CD8-positive, alpha-beta memory T cell (primary cell): ENCODE measurements at regions of chr3 and their contacts with region 1.

Region 1: GRCh38 chr3:48507351-48508061 is 3.5 kb upstream of the SHISA5 start:
- DNase-seq: peak; percentile 60 to 86 (median 71)
- H3K4me3 ChIP-seq: no peak overlapping the region
- H3K4me3 Mint-ChIP-seq: peak overlapping the region in 5 of 7 donors; percentile 18 to 62 (median 46)
- H3K27ac ChIP-seq: no peak overlapping the region
- H3K27ac Mint-ChIP-seq: peak overlapping the region; percentile 72 to 89 (median 85)
- H3K4me1 ChIP-seq: peaks cover 38% of the 10 kb centered on the region
- H3K4me1 Mint-ChIP-seq: peaks cover 31 to 48% (median 46%) of the 10 kb centered on the region in 3 donors
- H3K27me3 ChIP-seq: no peaks in the 10 kb centered on the region
- H3K27me3 Mint-ChIP-seq: peaks cover 0 to 9% of the 10 kb centered on the region in 2 donors

Region 2: DNA sequence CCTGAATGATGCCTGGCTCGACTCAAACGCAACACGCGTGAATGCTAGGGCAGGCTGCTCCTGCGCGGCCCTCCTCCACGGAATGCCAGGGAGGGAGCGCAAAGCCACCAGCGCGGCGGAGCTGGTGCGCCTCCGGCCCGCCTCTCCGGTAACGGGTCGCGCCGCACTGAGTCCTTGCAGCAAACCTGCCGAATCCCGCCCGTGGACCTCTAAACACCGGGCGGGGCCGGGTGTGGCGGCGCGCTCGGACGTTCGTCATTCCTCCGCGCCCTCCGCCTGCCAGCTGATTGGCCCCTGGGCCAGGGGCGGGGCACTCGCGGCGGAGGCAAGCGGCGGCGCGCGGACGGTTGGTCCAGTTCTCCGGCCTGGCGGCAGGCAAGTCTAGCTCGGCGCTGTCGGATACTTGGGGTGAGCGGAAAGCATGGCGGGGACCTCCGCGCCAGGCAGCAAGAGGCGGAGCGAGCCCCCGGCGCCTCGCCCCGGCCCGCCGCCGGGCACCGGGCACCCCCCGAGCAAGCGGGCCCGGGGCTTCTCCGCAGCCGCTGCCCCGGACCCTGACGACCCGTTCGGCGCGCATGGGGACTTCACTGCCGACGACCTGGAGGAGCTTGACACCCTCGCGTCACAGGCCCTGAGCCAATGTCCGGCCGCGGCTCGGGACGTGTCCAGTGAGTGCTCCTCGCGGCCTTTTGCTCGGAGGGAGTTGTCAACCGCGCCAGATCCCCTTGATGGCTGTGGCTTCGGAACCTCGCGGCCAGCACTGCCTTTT is 60.9 kb before region 1 on chr3 and contains the start of gene ATRIP:
- CTCF ChIA-PET with region 1: interaction called, 29 read pairs
- POLR2A ChIA-PET with region 1: interaction called, 6 read pairs
- DNase-seq: peak; percentile 78 to 89 (median 83)
- H3K4me3 ChIP-seq: peak within 1 kb of the TSS; percentile 88
- H3K4me3 Mint-ChIP-seq: peak within 1 kb of the TSS; percentile 84 to 94 (median 88)
- H3K27ac ChIP-seq: peak within 1 kb of the TSS; percentile 71
- H3K27ac Mint-ChIP-seq: peak within 1 kb of the TSS; percentile 91 to 96 (median 95)
- H3K4me1 ChIP-seq: peaks cover 26% of the 10 kb centered on the region
- H3K4me1 Mint-ChIP-seq: peaks cover 27 to 46% (median 37%) of the 10 kb centered on the region in 3 donors
- H3K27me3 ChIP-seq: no peaks in the 10 kb centered on the region
- H3K27me3 Mint-ChIP-seq: no peaks in the 10 kb centered on the region
- total RNA-seq, gene ATRIP: 22.1 to 22.8 TPM

Region 3: DNA sequence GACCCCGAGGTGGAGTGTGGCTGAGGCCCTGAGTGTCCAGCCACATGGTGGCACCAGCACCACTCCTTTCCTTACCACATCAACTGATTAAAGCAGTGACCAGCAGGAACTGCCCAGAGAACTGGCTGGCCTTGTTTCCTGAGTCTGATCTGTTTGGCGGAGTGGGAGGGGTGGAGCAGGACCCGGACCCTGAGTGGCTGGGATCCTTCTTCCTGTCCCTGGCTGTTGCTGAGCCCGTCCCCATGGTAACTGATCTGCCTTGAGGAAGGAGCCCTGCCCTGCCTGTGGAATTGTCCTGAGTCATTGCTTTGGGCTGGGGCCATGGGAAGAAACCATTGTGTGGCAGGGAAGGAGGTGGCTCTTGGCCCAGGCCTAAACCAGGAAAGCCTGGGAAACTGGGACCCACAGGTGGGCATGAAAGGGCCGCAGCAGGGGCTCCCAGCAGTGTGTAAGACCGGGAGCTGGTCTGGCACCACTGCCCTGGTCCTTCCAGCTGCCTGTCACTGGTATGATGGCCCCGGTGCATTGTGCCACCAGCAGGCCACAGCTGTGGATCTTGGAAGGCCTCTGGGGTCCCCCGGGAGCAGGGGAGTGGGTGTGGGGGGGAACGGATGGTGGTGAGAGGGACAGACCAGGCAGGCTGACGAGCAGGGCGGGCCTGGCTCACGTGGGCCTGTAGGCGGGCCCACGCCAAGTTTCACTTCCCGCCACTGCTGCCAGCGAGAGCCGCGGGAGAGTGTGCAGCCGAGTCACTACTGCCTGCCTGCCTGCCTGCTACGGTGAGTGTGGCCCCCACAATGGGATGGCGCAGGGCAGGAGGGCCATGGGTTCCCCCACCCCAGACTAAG is 41.8 kb before region 1 on chr3:
- CTCF ChIA-PET with region 1: interaction called, 15 read pairs
- POLR2A ChIA-PET with region 1: interaction called, 7 read pairs
- DNase-seq: peak; percentile 65 to 85 (median 74)
- H3K4me3 ChIP-seq: peak overlapping the region; percentile 71
- H3K4me3 Mint-ChIP-seq: peak overlapping the region; percentile 86 to 94 (median 90)
- H3K27ac ChIP-seq: peak overlapping the region; percentile 89
- H3K27ac Mint-ChIP-seq: peak overlapping the region; percentile 96 to 99 (median 97)
- H3K4me1 ChIP-seq: peaks cover 54% of the 10 kb centered on the region
- H3K4me1 Mint-ChIP-seq: peaks cover 41 to 61% (median 61%) of the 10 kb centered on the region in 3 donors
- H3K27me3 ChIP-seq: no peaks in the 10 kb centered on the region
- H3K27me3 Mint-ChIP-seq: no peaks in the 10 kb centered on the region

Region 4: DNA sequence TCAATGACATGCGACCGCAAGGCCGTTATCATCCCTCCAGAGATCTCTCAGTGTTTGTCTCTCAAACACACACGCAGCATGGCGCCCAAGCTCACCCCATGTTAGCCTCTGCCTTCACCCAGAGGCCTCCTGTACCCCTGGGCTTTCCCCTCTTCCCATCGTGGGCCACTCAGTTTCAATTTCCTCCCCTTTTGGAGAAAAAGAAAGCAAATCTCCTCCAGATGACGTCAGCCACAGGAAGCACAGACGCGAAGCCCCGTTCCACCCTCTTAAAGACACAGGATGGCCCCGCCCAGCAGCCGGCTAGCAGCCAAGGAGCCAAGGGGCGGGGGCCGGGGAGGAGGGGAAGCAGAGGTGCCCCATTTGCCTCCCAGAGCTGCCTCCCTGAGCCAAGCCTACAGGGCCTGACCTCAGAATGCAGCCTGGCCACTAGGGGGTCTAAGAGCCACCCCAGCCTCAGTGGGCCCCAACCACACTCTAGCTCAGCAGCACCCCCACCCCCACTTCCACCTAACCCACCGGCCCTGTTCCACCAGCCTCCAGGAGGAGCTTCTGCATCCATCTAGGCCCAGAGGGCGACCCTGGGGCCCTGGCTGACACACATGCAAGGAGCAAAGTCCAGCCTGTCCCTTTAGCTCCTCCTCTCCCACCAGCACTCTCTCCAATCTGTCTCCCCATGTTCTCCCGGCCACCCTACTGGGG is 34.4 kb before region 1 on chr3:
- CTCF ChIA-PET with region 1: interaction called, 23 read pairs
- POLR2A ChIA-PET with region 1: interaction called, 7 read pairs
- DNase-seq: peak; percentile 91 to 96 (median 94)
- H3K4me3 ChIP-seq: peak overlapping the region; percentile 98
- H3K4me3 Mint-ChIP-seq: peak overlapping the region; percentile 90 to 96 (median 95)
- H3K27ac ChIP-seq: peak overlapping the region; percentile 99
- H3K27ac Mint-ChIP-seq: peak overlapping the region; percentile 92 to 99 (median 98)
- H3K4me1 ChIP-seq: peaks cover 58% of the 10 kb centered on the region
- H3K4me1 Mint-ChIP-seq: peaks cover 47 to 79% (median 55%) of the 10 kb centered on the region in 3 donors
- H3K27me3 ChIP-seq: no peaks in the 10 kb centered on the region
- H3K27me3 Mint-ChIP-seq: no peaks in the 10 kb centered on the region

Region 5: DNA sequence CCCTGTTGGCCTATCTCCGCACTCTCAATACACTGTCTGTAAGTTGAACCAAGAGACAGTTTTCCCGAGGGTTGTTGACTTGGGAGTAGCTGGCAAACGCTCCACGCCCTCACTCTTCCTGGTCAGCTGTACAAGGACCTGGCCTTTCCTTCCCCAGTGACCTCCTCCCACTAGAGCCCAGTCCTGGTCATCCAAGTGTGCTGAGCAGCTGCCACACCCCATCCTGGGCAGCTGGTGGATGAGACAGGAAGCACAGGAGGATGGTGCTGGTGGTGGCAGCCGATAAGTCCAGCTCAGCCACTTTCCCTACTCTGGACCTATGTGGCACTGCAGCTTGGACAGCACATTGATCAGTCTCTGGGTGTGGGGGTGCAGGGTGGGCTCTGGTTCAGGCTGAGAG is 29.3 kb after region 1 on chr3:
- CTCF ChIA-PET with region 1: no interaction called
- POLR2A ChIA-PET with region 1: no interaction called
- DNase-seq: no peak
- H3K4me3 ChIP-seq: no peak overlapping the region
- H3K4me3 Mint-ChIP-seq: no peak overlapping the region
- H3K27ac ChIP-seq: no peak overlapping the region
- H3K27ac Mint-ChIP-seq: no peak overlapping the region
- H3K4me1 ChIP-seq: no peaks in the 10 kb centered on the region
- H3K4me1 Mint-ChIP-seq: peaks cover 0 to 3% (median 0%) of the 10 kb centered on the region in 3 donors
- H3K27me3 ChIP-seq: no peaks in the 10 kb centered on the region
- H3K27me3 Mint-ChIP-seq: peaks cover 0 to 3% of the 10 kb centered on the region in 2 donors

Region 6: DNA sequence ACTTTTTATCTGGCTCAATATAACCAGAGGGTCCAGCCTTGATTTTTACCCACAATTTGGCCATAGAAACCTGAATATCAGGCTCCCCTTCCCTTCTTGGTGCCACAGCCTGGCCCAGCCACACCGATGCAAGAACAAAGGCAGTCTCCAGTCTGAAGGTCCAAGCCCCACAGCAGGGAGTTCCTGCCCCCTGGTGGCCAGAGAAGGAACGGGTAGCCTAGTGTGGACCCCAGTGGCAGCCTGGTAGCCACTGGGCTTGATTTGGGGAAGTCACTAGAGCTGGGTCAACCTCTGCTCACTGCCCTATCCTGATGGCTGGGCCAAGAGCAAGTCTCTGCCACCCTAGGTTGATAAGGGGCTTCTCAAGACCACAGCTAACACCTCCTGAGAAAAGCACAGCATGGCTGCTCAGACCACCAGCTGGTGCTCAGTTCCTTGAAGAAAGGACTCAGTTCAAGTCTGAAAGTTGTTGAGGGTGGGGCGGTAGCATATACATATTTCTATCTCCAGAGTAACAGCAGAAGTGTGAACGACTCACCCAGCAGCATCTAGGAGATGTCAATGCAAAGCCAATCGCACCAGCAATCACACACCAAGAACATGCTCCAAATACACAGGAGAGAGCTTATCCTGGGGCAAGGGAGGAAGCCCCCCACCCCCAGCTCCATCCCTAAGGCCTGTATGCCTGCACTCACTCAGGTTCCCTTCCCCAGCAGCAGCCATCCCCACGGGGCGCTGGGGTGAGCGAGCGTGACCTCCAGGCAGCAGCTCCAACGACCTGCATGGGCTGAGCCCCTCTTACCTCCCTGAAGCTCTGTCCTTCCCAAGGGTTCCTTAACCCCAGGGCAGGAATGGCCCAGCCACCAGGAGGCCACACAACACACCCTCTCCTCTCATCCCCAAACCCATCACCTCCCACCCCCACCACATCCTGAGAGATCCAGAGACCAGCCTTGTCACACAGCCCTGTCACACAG is 41.5 kb after region 1 on chr3:
- CTCF ChIA-PET with region 1: interaction called, 20 read pairs
- POLR2A ChIA-PET with region 1: no interaction called
- DNase-seq: peak; percentile 66 to 87 (median 75)
- H3K4me3 ChIP-seq: no peak overlapping the region
- H3K4me3 Mint-ChIP-seq: no peak overlapping the region
- H3K27ac ChIP-seq: no peak overlapping the region
- H3K27ac Mint-ChIP-seq: no peak overlapping the region
- H3K4me1 ChIP-seq: peaks cover 9% of the 10 kb centered on the region
- H3K4me1 Mint-ChIP-seq: peaks cover 0 to 3% (median 3%) of the 10 kb centered on the region in 3 donors
- H3K27me3 ChIP-seq: no peaks in the 10 kb centered on the region
- H3K27me3 Mint-ChIP-seq: peaks cover 0 to 3% of the 10 kb centered on the region in 2 donors

Region 7: GRCh38 chr3:48770187-48770502 is 262.6 kb after region 1 on chr3:
- CTCF ChIA-PET with region 1: no interaction called
- POLR2A ChIA-PET with region 1: no interaction called
- DNase-seq: no peak
- H3K4me3 ChIP-seq: no peak overlapping the region
- H3K4me3 Mint-ChIP-seq: no peak overlapping the region
- H3K27ac ChIP-seq: no peak overlapping the region
- H3K27ac Mint-ChIP-seq: peak overlapping the region in 3 of 8 donors; percentile 63 to 73 (median 72)
- H3K4me1 ChIP-seq: no peaks in the 10 kb centered on the region
- H3K4me1 Mint-ChIP-seq: peaks cover 0 to 5% (median 0%) of the 10 kb centered on the region in 3 donors
- H3K27me3 ChIP-seq: no peaks in the 10 kb centered on the region
- H3K27me3 Mint-ChIP-seq: no peaks in the 10 kb centered on the region